Activated CD4-positive, alpha-beta T cell treated with anti-CD3 and anti-CD28 coated beads, Interleukin-2, amount 10 ng/mL, durations not matched to agents 24 days and 14 days (primary cell): ENCODE measurements at regions of chr3 and their contacts with region 1.

Region 1: DNA sequence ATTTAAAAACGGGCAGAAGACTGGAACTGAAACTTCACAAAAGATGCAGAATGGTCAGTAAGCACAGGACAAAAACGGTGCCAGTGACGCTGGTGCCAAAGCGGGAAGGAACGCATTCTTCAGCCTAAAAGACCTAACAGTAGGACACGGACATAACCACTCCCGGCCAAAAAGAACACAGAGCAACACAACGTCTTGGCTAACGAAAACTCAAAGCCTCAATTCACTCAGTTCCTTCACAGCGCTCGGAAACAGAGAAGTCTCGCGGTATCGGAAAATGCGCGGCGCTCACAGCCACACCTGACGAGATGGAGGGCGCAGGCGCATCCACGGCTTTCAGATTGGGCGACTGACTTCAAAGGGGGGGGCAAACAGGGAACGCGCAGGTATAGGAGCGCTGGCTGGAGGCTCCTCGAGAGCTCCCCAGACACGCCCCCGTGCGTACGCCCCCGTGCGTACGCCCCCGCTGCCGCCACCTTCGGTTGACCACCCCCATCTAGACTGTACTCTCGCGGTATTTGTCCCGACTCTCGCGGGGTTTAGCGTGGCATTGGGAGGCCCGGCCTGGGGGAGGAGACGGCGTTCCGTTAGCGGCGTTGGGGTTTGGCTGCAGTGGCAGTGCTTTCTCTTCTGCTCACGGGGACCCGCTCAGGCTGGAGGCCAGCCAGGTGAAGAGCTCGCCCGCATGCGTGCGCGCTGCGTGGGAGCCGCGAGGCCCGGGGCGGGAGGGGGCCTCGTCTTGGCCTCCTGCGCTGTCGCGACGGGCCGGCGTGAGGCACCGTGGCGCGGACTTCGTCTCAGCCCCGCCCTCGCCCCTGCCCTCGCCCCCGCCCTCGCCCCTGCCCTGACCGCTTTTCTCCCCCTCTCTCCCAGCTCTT is at the start of gene NKTR:
- DNase-seq: peak; percentile 100
- H3K4me3 Mint-ChIP-seq: peak within 1 kb of the TSS; percentile 94
- H3K27ac Mint-ChIP-seq: peak within 1 kb of the TSS; percentile 98
- H3K4me1 Mint-ChIP-seq: peaks cover 30% of the 10 kb centered on the region
- H3K27me3 Mint-ChIP-seq: no peaks in the 10 kb centered on the region
- total RNA-seq, gene NKTR: 79.5 and 80.9 TPM in 2 replicates

Region 2: GRCh38 chr3:41073190-41073589 is 1527.2 kb before region 1 on chr3:
- intact Hi-C with region 1: no loop called
- DNase-seq: no peak
- H3K4me3 Mint-ChIP-seq: no peak overlapping the region
- H3K27ac Mint-ChIP-seq: no peak overlapping the region
- H3K4me1 Mint-ChIP-seq: no peaks in the 10 kb centered on the region
- H3K27me3 Mint-ChIP-seq: no peaks in the 10 kb centered on the region

Region 3: GRCh38 chr3:42351207-42351606 is 249.1 kb before region 1 on chr3:
- intact Hi-C with region 1: no loop called
- DNase-seq: no peak
- H3K4me3 Mint-ChIP-seq: no peak overlapping the region
- H3K27ac Mint-ChIP-seq: no peak overlapping the region
- H3K4me1 Mint-ChIP-seq: no peaks in the 10 kb centered on the region
- H3K27me3 Mint-ChIP-seq: peaks cover 2% of the 10 kb centered on the region

Region 4: DNA sequence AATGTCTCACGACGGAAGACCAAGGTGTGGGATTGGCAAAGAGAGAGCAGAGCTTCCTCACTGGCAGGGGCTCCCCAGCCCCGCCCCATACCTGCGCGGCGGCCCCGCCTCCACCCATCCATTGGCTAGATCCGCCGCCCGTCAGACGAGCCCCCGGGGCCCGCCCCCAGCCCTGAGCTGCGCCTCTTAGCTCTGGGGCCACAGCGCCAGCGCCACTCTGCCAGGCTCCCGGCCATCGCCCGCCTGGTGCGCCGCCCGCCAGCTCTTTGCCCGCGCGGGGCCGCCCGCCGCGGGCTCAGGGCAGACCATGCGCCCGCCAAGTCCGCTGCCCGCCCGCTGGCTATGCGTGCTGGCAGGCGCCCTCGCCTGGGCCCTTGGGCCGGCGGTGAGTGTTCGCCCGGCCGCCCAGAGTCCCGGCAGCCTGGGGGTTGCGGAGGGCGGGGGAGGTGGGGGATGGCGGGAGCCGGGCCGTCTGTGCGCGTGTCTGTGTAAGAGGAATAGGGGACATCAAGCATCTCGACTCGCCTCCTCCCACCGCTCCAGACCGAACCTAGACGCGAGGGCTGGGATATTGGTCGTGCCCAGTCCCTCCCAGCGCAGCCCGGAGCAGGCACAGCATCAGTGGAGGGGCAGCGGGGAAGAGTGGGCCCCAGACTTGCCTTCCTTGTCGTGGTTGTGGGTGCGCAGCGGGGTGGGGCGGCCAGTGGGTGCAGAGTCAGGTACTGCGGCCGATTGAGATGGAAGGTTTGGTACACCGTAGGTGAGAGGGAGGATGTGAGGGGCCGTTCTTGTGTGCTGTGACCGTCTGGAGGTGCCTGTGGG is 97.7 kb before region 1 on chr3 and contains the start of gene VIPR1:
- intact Hi-C with region 1: loop called (anchors 5 kb)
- DNase-seq: peak; percentile 96
- H3K4me3 Mint-ChIP-seq: peak within 1 kb of the TSS; percentile 93
- H3K27ac Mint-ChIP-seq: peak within 1 kb of the TSS; percentile 14
- H3K4me1 Mint-ChIP-seq: peaks cover 24% of the 10 kb centered on the region
- H3K27me3 Mint-ChIP-seq: peaks cover 52% of the 10 kb centered on the region
- total RNA-seq, gene VIPR1: 0.68 and 0.80 TPM in 2 replicates

Region 5: DNA sequence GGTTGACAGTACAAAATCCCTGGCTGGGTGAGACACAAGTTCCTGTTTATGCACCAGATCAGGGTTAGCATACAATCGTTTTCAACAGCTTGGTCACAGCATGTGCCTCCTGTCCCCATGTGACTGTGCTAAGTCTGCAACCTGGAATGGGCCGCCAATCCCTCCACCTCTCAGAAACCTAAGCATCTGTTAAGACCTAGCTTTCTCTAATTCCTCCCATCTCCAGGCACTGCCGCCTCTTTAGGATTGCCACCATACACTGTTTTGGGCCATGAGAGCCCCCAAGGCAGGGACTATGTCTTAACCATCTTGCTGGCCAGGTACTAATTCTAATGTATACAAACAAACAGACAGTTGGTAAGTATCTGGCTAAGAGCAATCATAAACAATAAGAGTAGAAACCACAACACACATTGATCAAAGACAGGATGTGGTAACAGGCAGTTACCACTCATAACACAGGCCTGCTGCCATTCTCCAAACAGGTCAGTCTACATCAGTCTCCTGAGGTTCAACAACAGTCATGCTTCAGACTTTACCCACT is 44.2 kb before region 1 on chr3:
- intact Hi-C with region 1: loop called (anchors 2 kb)
- DNase-seq: peak; percentile 87
- H3K4me3 Mint-ChIP-seq: peak overlapping the region; percentile 73
- H3K27ac Mint-ChIP-seq: peak overlapping the region; percentile 96
- H3K4me1 Mint-ChIP-seq: peaks cover 32% of the 10 kb centered on the region
- H3K27me3 Mint-ChIP-seq: no peaks in the 10 kb centered on the region

Region 6: DNA sequence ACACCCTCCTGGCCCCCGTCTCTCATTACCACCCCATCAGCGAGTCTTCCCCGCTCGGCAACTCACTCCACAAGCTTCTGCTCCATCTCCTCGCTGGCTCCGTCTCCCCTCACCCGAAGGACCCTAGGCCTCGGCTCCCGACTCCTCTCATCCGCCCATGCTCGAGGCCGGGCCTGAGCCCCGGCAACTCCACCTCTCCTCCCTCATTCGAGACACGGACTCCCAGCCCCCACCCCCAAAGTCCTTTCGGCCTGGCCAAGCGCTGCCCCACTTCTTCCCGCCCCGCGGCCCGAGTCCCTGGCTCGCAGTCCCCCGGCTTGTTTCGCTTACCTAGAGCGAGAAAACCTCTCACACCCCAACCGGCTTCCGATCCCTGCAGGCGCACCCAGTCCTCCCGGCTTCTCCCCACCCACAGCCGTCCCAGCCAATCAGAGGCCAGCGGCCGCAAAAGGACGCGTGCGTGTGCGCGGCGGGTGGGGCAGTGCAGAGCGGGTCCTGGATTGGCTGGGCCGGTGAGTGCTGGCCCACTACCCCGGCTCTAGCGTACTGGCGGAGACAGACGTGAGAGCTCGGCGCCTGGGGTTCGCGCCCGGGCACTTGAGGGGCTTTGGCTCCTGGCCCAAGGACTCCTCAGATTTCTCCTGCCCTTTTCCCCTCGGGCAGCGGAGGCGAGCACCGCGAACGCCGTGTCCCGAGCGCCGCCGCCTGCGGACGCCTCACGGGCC is 203.9 kb after region 1 on chr3 and contains the start of gene HIGD1A:
- intact Hi-C with region 1: loop called (anchors 1 kb)
- DNase-seq: peak; percentile 98
- H3K4me3 Mint-ChIP-seq: peak within 1 kb of the TSS; percentile 99
- H3K27ac Mint-ChIP-seq: peak within 1 kb of the TSS; percentile 97
- H3K4me1 Mint-ChIP-seq: peaks cover 29% of the 10 kb centered on the region
- H3K27me3 Mint-ChIP-seq: peaks cover 34% of the 10 kb centered on the region
- total RNA-seq, gene HIGD1A: 88.6 and 91.6 TPM in 2 replicates

Region 7: GRCh38 chr3:43013743-43014155 is 413.4 kb after region 1 on chr3:
- intact Hi-C with region 1: no loop called
- DNase-seq: peak; percentile 63
- H3K4me3 Mint-ChIP-seq: no peak overlapping the region
- H3K27ac Mint-ChIP-seq: no peak overlapping the region
- H3K4me1 Mint-ChIP-seq: no peaks in the 10 kb centered on the region
- H3K27me3 Mint-ChIP-seq: no peaks in the 10 kb centered on the region